ENCODE measurements at regions of chr4 and their contacts with region 1.

Region 1: GRCh38 chr4:151362404-151363164 is 37.2 kb upstream of the SH3D19 start:
- DNase-seq: peak; percentile 58 to 90 (median 68)
- ATAC-seq: peak; percentile 100
- H3K4me3 ChIP-seq: no peak overlapping the region
- H3K4me3 Mint-ChIP-seq: no peak overlapping the region
- H3K27ac ChIP-seq: no peak overlapping the region
- H3K27ac Mint-ChIP-seq: no peak overlapping the region
- H3K4me1 ChIP-seq: no peaks in the 10 kb centered on the region
- H3K4me1 Mint-ChIP-seq: no peaks in the 10 kb centered on the region
- H3K27me3 ChIP-seq: no peaks in the 10 kb centered on the region
- H3K27me3 Mint-ChIP-seq: peaks cover 13% of the 10 kb centered on the region
- CTCF ChIP-seq: peak; percentile 88

Region 2: GRCh38 chr4:151117371-151117962 is 245.1 kb before region 1 on chr4:
- CTCF ChIA-PET with region 1: no interaction called
- POLR2A ChIA-PET with region 1: no interaction called
- intact Hi-C with region 1: loop called (anchors 5 kb)
- DNase-seq: peak; percentile 16 to 68 (median 41)
- ATAC-seq: peak; percentile 86
- H3K4me3 ChIP-seq: no peak overlapping the region
- H3K4me3 Mint-ChIP-seq: no peak overlapping the region
- H3K27ac ChIP-seq: no peak overlapping the region
- H3K27ac Mint-ChIP-seq: no peak overlapping the region
- H3K4me1 ChIP-seq: no peaks in the 10 kb centered on the region
- H3K4me1 Mint-ChIP-seq: peaks cover 7% of the 10 kb centered on the region
- H3K27me3 ChIP-seq: no peaks in the 10 kb centered on the region
- H3K27me3 Mint-ChIP-seq: no peaks in the 10 kb centered on the region
- CTCF ChIP-seq: peak; percentile 67

Region 3: DNA sequence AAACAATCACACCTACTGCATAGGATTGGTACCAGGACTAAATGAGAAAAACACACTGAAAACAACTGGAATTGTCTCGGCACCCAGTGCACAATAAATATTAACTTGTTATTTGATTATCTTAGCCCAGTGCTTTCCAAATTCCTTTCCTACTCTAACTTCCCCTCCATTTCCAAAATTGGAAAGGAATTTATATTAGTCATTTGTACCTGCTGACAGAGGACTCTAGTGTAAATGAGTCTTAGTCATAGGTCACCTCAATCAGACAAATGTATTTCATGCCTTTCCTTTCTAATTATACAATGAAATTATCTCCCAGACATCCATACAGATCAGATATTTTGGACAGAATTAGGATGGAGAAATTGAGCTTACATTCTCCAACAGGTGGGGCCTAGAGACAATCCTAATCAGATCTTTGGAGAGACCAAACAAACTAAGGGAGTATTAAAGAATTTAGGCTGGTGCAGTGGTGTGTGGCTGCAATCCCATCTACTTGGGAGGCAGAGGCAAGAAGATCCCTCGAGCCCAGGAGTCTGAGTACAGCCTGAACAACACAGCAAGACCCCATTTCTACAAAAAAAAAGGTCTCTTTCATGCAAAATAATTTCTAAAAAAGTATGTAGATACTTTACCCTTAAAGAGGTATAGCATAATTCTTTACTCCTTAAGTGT is 47.2 kb before region 1 on chr4:
- CTCF ChIA-PET with region 1: no interaction called
- POLR2A ChIA-PET with region 1: no interaction called
- intact Hi-C with region 1: no loop called
- DNase-seq: no peak
- ATAC-seq: no peak
- H3K4me3 ChIP-seq: no peak overlapping the region
- H3K4me3 Mint-ChIP-seq: no peak overlapping the region
- H3K27ac ChIP-seq: no peak overlapping the region
- H3K27ac Mint-ChIP-seq: no peak overlapping the region
- H3K4me1 ChIP-seq: no peaks in the 10 kb centered on the region
- H3K4me1 Mint-ChIP-seq: no peaks in the 10 kb centered on the region
- H3K27me3 ChIP-seq: no peaks in the 10 kb centered on the region
- H3K27me3 Mint-ChIP-seq: peaks cover 27% of the 10 kb centered on the region
- CTCF ChIP-seq: no peak

Region 4: DNA sequence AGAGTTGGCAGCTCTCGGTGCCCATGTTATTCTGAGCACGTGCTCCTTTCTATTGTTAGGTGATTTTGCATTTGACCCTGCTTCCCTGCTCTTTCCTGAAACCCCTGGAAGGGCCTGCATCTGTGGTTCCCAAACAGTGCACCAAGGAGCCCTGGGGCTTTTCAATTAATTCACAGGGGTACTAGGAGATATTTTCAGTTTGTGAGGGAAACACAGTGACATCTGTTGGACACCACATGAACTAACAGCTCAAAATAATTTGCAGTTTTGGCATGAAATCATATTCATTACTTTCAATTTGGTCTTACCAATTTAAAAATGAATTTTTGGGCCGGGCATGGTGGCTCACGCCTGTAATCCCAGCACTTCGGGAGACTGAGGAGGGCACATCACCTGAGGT is 241.7 kb after region 1 on chr4:
- CTCF ChIA-PET with region 1: no interaction called
- POLR2A ChIA-PET with region 1: no interaction called
- intact Hi-C with region 1: loop called in 1 of 2 experiments (anchors 5 kb)
- DNase-seq: peak in 1 of 14 experiments; percentile 2
- ATAC-seq: no peak
- H3K4me3 ChIP-seq: no peak overlapping the region
- H3K4me3 Mint-ChIP-seq: no peak overlapping the region
- H3K27ac ChIP-seq: no peak overlapping the region
- H3K27ac Mint-ChIP-seq: no peak overlapping the region
- H3K4me1 ChIP-seq: no peaks in the 10 kb centered on the region
- H3K4me1 Mint-ChIP-seq: no peaks in the 10 kb centered on the region
- H3K27me3 ChIP-seq: no peaks in the 10 kb centered on the region
- H3K27me3 Mint-ChIP-seq: no peaks in the 10 kb centered on the region
- CTCF ChIP-seq: no peak

Region 5: GRCh38 chr4:152369902-152370295 is 1007.3 kb after region 1 on chr4:
- CTCF ChIA-PET with region 1: no interaction called
- POLR2A ChIA-PET with region 1: no interaction called
- intact Hi-C with region 1: loop called (anchors 1 to 5 kb)
- DNase-seq: peak in 3 of 14 experiments; percentile 14 to 22 (median 15)
- ATAC-seq: no peak
- H3K4me3 ChIP-seq: no peak overlapping the region
- H3K4me3 Mint-ChIP-seq: no peak overlapping the region
- H3K27ac ChIP-seq: no peak overlapping the region
- H3K27ac Mint-ChIP-seq: no peak overlapping the region
- H3K4me1 ChIP-seq: no peaks in the 10 kb centered on the region
- H3K4me1 Mint-ChIP-seq: peaks cover 13% of the 10 kb centered on the region
- H3K27me3 ChIP-seq: no peaks in the 10 kb centered on the region
- H3K27me3 Mint-ChIP-seq: no peaks in the 10 kb centered on the region
- CTCF ChIP-seq: peak; percentile 68

Region 6: GRCh38 chr4:152385551-152385950 is 1023.0 kb after region 1 on chr4:
- CTCF ChIA-PET with region 1: interaction called, 4 read pairs
- POLR2A ChIA-PET with region 1: no interaction called
- intact Hi-C with region 1: loop called (anchors 1 to 5 kb)
- DNase-seq: peak in 4 of 14 experiments; percentile 10 to 28 (median 19)
- ATAC-seq: peak; percentile 53
- H3K4me3 ChIP-seq: no peak overlapping the region
- H3K4me3 Mint-ChIP-seq: no peak overlapping the region
- H3K27ac ChIP-seq: no peak overlapping the region
- H3K27ac Mint-ChIP-seq: peak overlapping the region; percentile 71
- H3K4me1 ChIP-seq: no peaks in the 10 kb centered on the region
- H3K4me1 Mint-ChIP-seq: peaks cover 37% of the 10 kb centered on the region
- H3K27me3 ChIP-seq: no peaks in the 10 kb centered on the region
- H3K27me3 Mint-ChIP-seq: no peaks in the 10 kb centered on the region
- CTCF ChIP-seq: peak; percentile 72

Measured in CD4-positive, alpha-beta T cell (primary cell).